Cardiac septum (tissue), 1 donor: ENCODE measurements at regions of chr9 and their contacts with region 1.

Region 1: DNA sequence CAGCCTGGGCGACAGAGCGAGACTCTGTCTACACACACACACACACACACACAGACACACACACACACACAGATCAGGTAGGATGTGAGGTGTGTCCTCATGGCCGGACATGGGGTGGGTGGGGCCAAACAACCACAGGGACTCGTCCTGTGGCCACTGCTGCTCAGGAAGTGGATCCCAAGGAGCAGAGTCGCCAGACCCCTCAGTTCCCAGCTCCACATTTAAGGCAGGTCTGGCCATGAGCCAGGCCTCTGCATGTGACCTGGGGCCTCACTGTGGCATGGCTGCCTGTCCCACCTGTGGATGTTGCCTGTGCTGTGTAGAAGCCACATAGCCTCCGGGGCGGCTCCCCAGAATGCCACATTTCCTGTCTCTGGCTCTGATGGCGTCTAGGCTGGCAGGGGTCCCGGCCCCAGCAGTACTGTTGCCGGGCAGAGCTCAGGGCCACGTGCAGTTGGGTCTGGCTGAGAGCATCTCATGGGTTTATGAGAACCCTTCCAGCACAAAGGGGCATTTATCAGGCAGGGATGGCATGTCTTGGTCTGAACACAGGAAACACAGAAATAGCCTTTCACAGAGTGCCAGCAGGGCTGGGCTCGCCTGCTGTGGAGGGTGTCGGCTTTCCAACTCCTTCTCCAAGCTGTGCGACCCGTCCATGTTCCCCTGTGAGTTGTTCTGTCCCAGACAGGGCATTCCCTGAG is 9.9 kb upstream of the NINJ1 start:
- DNase-seq: no peak

Region 2: GRCh38 chr9:93108291-93109041 is 35.5 kb before region 1 on chr9:
- intact Hi-C with region 1: loop called (anchors 5 kb)
- DNase-seq: peak; percentile 63

Region 3: DNA sequence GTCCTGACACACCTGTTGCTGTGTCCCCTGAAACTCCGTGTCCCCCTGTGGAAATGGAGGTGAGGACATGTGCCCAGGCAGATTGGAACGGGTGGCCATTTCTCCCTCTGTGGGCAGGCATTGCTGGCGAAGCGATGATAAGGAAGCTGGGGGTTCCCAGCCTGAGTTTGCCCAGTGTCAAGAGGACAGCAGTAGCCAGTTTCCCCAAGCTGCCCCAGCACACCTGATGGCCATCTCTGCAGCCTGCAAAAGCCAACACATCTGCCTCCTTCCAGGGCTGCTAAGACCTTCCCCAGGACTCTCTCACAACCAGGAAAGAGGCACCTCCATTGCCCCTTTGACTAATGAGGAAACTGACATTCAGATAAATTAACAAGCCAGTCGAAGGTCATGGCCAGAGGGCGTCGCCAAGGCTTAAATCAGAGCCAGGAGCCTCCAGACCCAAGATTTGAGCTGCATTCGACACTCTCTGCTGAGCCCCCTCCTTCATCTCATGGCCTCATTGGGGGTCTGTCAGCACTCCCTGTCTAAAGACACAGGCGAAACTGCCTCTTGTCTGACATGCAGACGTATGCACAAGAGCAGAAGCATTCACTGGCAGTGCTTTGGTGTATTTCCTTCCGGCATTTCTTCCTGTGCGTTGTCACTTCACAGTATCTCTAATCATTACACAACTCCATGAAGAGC is 29.5 kb after region 1 on chr9:
- intact Hi-C with region 1: no loop called
- DNase-seq: no peak